Heart left ventricle (tissue), 16 donors: ENCODE measurements at regions of chr5 and their contacts with region 1.

Region 1: GRCh38 chr5:156824800-156825199 is 25.3 kb upstream of the PPP1R2B start:
- DNase-seq: no peak
- ATAC-seq: peak; percentile 48 to 84 (median 64)
- H3K4me3 ChIP-seq: no peak overlapping the region
- H3K27ac ChIP-seq: no peak overlapping the region
- H3K4me1 ChIP-seq: no peaks in the 10 kb centered on the region
- H3K27me3 ChIP-seq: no peaks in the 10 kb centered on the region
- CTCF ChIP-seq: peak; percentile 17 to 67 (median 56)
- POLR2A ChIP-seq: no peak

Region 2: GRCh38 chr5:154940772-154941620 is 1883.8 kb before region 1 on chr5 and contains the start of gene MRPL22:
- intact Hi-C with region 1: loop called in 2 of 10 experiments (anchors 10 kb)
- DNase-seq: peak; percentile 93 to 95 (median 95)
- ATAC-seq: peak; percentile 69 to 81 (median 78)
- H3K4me3 ChIP-seq: peak within 1 kb of the TSS; percentile 51 to 91 (median 76)
- H3K27ac ChIP-seq: peak within 1 kb of the TSS in 11 of 12 donors; percentile 65 to 89 (median 81)
- H3K4me1 ChIP-seq: peaks cover 9 to 53% (median 43%) of the 10 kb centered on the region in 12 donors
- H3K27me3 ChIP-seq: no peaks in the 10 kb centered on the region
- CTCF ChIP-seq: peak in 1 of 12 donors; percentile 15
- POLR2A ChIP-seq: peak in 1 of 2 donors; percentile 65
- total RNA-seq, gene MRPL22: 25.7 to 76.3 (median 58.0) TPM

Region 3: GRCh38 chr5:155147222-155147621 is 1677.6 kb before region 1 on chr5:
- intact Hi-C with region 1: loop called in 1 of 10 experiments (anchors 10 kb)
- DNase-seq: no peak
- ATAC-seq: no peak
- H3K4me3 ChIP-seq: no peak overlapping the region
- H3K27ac ChIP-seq: no peak overlapping the region
- H3K4me1 ChIP-seq: peaks cover 0 to 11% (median 0%) of the 10 kb centered on the region in 12 donors
- H3K27me3 ChIP-seq: no peaks in the 10 kb centered on the region
- CTCF ChIP-seq: peak in 8 of 12 donors; percentile 7 to 33 (median 20)
- POLR2A ChIP-seq: no peak

Region 4: GRCh38 chr5:155936520-155937406 is 888.0 kb before region 1 on chr5:
- intact Hi-C with region 1: loop called in 6 of 10 experiments (anchors 5 to 10 kb)
- DNase-seq: peak in 4 of 5 donors; percentile 16 to 44 (median 40)
- ATAC-seq: peak; percentile 46 to 81 (median 79)
- H3K4me3 ChIP-seq: no peak overlapping the region
- H3K27ac ChIP-seq: no peak overlapping the region
- H3K4me1 ChIP-seq: peaks cover 0 to 10% (median 0%) of the 10 kb centered on the region in 12 donors
- H3K27me3 ChIP-seq: no peaks in the 10 kb centered on the region
- CTCF ChIP-seq: no peak
- POLR2A ChIP-seq: no peak

Region 5: DNA sequence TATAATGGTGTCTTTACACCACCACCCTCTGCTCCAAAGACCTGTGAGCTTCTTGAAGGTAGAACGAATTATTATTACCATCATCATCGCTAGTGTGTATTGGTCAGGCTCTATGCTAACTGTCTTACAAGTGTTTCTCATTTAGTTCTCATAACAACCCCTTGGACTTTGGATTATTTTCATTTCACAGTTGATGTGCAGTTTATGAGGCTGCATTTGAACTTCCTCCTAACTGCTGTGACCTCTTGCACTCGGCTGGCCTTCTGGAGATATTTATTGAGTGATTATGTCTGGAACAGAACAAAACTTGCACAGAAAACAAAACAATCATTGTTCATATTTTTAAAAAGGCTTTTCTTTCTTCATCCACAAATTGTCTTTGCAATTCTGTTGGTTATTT is 804.2 kb before region 1 on chr5:
- intact Hi-C with region 1: loop called in 1 of 10 experiments (anchors 10 kb)
- DNase-seq: no peak
- ATAC-seq: no peak
- H3K4me3 ChIP-seq: no peak overlapping the region
- H3K27ac ChIP-seq: no peak overlapping the region
- H3K4me1 ChIP-seq: peaks cover 0 to 15% (median 0%) of the 10 kb centered on the region in 12 donors
- H3K27me3 ChIP-seq: no peaks in the 10 kb centered on the region
- CTCF ChIP-seq: no peak
- POLR2A ChIP-seq: no peak

Region 6: DNA sequence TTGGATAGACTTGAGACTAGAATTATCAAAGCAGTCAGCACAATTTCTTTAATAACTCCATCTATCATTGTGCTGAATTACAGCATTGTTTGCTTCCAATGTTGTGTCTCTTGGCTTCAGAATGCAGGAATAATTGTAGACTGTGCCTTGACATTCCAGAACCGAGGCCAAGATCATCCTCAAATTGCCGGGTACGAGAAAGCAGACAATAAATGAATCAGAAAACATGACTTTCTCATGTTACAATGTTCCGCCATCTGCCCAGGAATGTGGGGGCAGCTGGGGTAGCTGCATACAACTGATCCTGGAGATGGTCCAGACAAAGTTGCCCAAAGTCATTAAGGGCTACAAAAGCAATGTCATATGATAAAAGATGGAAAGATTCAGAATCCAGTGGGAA is 704.0 kb before region 1 on chr5:
- intact Hi-C with region 1: no loop called
- DNase-seq: no peak
- ATAC-seq: no peak
- H3K4me3 ChIP-seq: no peak overlapping the region
- H3K27ac ChIP-seq: no peak overlapping the region
- H3K4me1 ChIP-seq: peaks cover 0 to 9% (median 0%) of the 10 kb centered on the region in 12 donors
- H3K27me3 ChIP-seq: no peaks in the 10 kb centered on the region
- CTCF ChIP-seq: no peak
- POLR2A ChIP-seq: no peak